Activated CD4-positive, alpha-beta memory T cell treated with anti-CD3 and anti-CD28 coated beads for 36 hours (primary cell): ENCODE measurements at regions of chr7 and their contacts with region 1.

Region 1: DNA sequence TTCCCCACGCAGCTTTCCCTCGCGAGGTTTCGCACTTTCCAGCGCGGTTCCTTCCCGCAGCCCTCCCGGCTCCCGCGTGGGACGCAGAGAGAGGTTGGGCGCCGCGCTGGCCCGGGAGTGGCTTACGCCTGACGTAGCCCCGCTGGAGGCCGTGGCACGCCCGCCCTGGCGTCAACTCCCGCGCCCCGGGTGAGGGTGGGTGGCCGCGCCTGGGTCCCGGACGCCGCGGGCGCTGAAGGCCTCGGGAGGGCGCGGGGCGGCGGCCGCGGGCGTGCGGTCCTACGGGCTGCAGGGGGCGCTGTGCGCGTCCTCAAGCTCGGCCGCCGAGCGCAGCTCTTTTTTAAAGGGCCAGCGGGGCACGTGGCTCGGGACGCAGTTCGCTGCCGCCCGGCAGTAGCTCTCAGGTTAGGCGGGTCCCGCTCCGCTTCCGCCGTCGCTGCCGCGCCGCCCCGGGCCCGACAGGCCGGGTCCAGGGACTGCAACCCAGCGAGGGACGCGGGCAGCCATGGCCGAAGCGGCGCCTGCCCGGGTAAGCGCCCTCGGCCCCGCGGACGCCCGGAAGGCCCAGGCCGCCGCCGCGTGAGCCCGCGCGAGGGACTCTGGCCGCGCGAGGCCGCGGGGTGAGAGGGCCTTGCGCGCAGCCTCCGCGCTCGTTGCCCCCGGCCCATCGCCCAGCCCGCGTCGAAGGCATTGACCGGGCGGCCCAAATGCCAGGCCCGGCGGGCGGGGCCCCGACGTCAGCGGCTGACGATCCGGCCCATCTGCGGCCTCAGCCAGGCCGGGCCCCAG is at the start of gene ZNF783:
- DNase-seq: peak; percentile 88
- H3K4me3 Mint-ChIP-seq: peak within 1 kb of the TSS; percentile 78
- H3K27ac Mint-ChIP-seq: peak within 1 kb of the TSS; percentile 94
- H3K4me1 Mint-ChIP-seq: peaks cover 49% of the 10 kb centered on the region
- H3K27me3 Mint-ChIP-seq: no peaks in the 10 kb centered on the region
- total RNA-seq, gene ZNF783: 15.5 to 17.1 TPM

Region 2: GRCh38 chr7:149125863-149126661 is 136.0 kb before region 1 on chr7 and contains the start of gene ZNF425:
- CTCF ChIA-PET with region 1: no interaction called
- POLR2A ChIA-PET with region 1: no interaction called
- intact Hi-C with region 1: loop called (anchors 2 kb)
- DNase-seq: peak; percentile 95
- H3K4me3 Mint-ChIP-seq: peak within 1 kb of the TSS; percentile 98
- H3K27ac Mint-ChIP-seq: peak within 1 kb of the TSS; percentile 98
- H3K4me1 Mint-ChIP-seq: peaks cover 18% of the 10 kb centered on the region
- H3K27me3 Mint-ChIP-seq: no peaks in the 10 kb centered on the region
- total RNA-seq, gene ZNF425: 0.74 to 0.75 TPM

Region 3: GRCh38 chr7:149239345-149240191 is 22.5 kb before region 1 on chr7 and contains the start of gene ZNF212:
- CTCF ChIA-PET with region 1: interaction called, 7 read pairs
- POLR2A ChIA-PET with region 1: interaction called, 9 read pairs
- intact Hi-C with region 1: loop called (anchors 1 kb)
- DNase-seq: peak; percentile 94
- H3K4me3 Mint-ChIP-seq: peak within 1 kb of the TSS; percentile 94
- H3K27ac Mint-ChIP-seq: peak within 1 kb of the TSS; percentile 90
- H3K4me1 Mint-ChIP-seq: peaks cover 42% of the 10 kb centered on the region
- H3K27me3 Mint-ChIP-seq: peaks cover 6% of the 10 kb centered on the region
- total RNA-seq, gene ZNF212: 21.5 to 21.9 TPM

Region 4: DNA sequence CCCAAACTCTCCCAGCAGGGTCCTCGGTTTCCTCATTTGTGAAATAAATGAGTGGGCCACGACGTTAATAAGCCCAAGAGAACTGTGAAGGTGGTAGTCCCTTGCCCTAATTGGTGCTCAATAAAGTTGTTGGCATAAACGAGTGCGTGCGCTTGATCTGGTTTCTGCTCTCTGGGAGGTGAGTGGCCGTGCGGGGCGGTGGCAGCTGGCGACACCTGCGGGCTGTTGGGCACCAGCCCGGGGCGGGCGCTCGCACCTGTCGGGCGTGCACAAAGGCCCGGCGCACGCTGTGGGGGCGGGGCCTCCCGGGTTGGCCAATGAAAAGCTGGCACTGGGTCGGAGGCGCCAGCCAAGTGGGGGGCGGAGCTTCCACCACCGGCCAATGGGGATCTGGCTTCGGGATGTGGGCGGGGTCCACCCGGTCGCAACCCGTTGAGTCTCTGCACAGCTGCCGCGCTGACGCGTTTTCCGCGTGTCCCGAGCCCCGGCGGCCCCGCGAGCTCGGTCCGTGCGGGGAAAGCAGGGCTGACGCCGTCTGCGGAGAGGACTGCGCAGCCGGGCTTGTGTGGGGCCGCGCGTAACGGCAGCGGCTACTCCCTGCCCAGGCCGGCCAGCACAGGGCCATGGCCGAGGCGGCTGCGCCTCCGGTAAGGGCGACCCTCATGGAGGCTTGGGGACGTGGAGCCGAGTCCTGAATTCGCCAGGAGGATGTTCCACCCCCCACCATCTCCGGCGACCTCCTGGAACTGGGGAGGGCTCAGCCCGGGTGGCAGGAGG is 23.0 kb after region 1 on chr7:
- CTCF ChIA-PET with region 1: interaction called, 28 read pairs
- POLR2A ChIA-PET with region 1: interaction called, 7 read pairs
- intact Hi-C with region 1: loop called (anchors 1 kb)
- DNase-seq: peak; percentile 99
- H3K4me3 Mint-ChIP-seq: peak overlapping the region; percentile 82
- H3K27ac Mint-ChIP-seq: peak overlapping the region; percentile 48
- H3K4me1 Mint-ChIP-seq: peaks cover 37% of the 10 kb centered on the region
- H3K27me3 Mint-ChIP-seq: no peaks in the 10 kb centered on the region

Region 5: DNA sequence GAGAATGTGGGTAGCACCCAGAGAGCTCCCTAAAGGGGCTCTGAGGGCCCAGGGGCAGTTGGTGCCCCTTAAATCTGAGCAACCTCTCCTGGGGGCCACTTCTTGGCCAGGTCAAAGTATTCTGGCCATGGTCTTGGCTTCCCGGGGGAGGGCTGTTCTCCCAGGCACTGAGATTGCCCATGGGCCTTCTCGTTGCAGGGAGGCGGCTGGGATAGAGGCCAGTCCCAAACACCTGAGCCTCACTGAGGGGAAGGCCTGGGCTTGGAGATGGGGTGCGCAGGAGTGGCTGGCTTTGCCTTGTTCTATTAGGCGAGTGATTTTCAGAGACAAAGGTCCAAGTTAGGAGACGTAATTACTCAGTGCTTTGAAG is 33.4 kb after region 1 on chr7:
- CTCF ChIA-PET with region 1: no interaction called
- POLR2A ChIA-PET with region 1: no interaction called
- intact Hi-C with region 1: no loop called
- DNase-seq: no peak
- H3K4me3 Mint-ChIP-seq: no peak overlapping the region
- H3K27ac Mint-ChIP-seq: no peak overlapping the region
- H3K4me1 Mint-ChIP-seq: peaks cover 14% of the 10 kb centered on the region
- H3K27me3 Mint-ChIP-seq: no peaks in the 10 kb centered on the region

Region 6: DNA sequence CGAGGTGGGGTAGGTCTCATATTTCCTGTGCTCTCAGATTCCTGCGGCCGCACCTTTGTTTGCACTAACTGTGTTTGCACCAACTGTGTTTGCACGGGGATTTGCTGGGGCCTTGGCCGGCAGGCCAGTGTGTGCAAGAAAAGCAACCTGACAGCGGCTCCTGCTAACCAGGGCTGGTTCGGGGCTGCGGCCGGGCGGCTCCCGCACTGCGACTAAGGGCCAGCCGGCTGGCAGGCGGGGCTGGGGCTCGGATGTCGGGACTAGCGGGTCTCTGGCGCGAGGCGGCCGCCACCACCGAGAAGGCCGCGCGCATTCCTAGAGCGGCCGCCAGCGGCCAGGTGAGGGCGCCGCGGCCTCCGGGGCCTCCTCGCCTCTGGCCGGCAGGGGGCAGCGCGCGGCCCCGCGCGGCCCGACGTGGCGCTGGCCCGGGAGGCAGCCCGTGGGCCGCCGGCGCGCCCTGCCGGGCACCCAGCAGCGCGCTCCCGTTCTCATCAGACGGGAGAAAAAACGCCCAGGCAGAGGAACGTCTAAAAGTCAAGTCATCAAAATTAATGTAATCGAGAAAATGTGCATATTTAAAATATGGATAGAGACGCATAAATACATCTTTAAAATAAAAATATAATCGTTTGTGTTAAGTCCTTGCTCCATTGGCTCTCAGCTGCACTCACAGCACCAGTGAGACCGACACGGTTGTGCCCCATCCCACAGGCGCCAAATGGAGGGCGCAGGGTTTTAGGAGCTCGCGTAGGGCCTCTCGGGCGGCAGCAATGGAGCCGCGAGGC is 160.3 kb after region 1 on chr7:
- CTCF ChIA-PET with region 1: interaction called, 20 read pairs
- POLR2A ChIA-PET with region 1: interaction called, 6 read pairs
- intact Hi-C with region 1: loop called (anchors 2 kb)
- DNase-seq: peak; percentile 80
- H3K4me3 Mint-ChIP-seq: peak overlapping the region; percentile 72
- H3K27ac Mint-ChIP-seq: peak overlapping the region; percentile 51
- H3K4me1 Mint-ChIP-seq: peaks cover 9% of the 10 kb centered on the region
- H3K27me3 Mint-ChIP-seq: no peaks in the 10 kb centered on the region